Prostate gland (tissue), 2 donors: ENCODE measurements at regions of chr20 and their contacts with region 1.

Region 1: GRCh38 chr20:50189681-50190582 is 698 bp upstream of the CEBPB start:
- DNase-seq: peak; percentile 88
- H3K4me3 ChIP-seq: peak overlapping the region; percentile 83 to 92
- H3K27ac ChIP-seq: peak overlapping the region; percentile 99
- H3K4me1 ChIP-seq: no peaks in the 10 kb centered on the region
- H3K27me3 ChIP-seq: no peaks in the 10 kb centered on the region
- CTCF ChIP-seq: peak; percentile 80 to 98 (median 88)
- POLR2A ChIP-seq: no peak

Region 2: DNA sequence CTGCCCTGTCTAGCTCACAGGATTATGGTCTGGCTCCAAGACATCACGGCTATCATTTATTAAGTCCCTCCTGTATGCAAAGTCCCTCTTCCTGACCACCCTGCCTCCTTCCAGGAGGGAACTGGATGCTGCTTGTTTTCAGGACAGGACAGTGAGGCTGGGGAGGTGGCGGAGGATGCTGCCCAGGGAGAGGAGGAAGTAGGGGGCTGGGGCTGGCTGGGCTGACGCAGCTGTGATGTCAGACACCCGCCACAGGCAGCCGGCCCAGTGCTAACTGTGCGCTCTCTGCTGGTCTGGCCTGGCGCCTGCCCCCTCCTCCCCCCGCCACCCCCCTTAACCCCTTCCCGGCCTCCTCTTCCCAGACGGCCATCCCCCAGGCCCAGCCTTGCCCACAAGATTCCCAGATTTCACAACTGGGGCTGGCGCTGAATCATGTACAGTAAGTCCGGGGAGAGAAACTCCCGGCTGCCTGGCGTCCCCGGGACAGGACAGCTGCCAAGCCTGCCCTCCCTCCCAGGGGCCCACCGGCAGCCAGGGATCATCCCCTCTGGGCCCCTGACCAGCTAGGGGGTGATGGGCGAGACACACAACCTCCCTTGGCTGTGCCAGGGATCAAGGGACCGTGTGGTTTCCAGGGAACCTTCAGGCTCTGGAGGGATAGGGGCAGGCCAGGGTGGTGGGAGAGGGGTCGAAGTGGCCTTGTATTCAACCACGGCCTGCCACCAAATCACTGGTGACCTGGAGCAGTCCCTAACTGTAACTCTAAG is 118.8 kb after region 1 on chr20:
- intact Hi-C with region 1: loop called (anchors 5 kb)
- DNase-seq: peak; percentile 70
- H3K4me3 ChIP-seq: no peak overlapping the region
- H3K27ac ChIP-seq: peak overlapping the region; percentile 82 to 83
- H3K4me1 ChIP-seq: peaks cover 14% of the 10 kb centered on the region
- H3K27me3 ChIP-seq: no peaks in the 10 kb centered on the region
- CTCF ChIP-seq: peak in 1 of 4 experiments; percentile 12
- POLR2A ChIP-seq: peak; percentile 45

Region 3: DNA sequence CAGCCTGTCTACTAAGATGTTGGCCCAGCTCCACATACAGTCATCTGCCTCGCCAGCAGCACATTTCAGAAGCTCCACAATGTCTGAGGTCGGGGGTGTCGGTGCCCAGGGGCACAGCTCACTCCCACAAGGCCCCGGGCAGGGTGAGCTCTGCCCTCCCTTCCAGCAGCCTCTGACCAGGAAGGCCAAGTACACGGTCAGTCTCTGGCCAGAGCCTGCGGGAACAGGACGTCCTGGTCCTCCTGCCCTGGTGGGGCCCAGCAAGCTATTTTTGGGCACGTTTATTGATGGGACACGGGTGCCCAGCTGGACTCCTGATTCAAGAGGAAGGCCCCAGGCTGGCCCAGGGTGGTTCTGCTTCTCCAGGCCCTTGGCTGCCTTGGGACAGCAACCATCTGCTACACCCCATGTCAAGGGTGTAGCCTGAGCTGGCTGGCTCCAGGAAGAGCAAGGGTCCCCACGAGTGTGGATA is 205.4 kb after region 1 on chr20:
- intact Hi-C with region 1: loop called (anchors 5 kb)
- DNase-seq: peak; percentile 55
- H3K4me3 ChIP-seq: no peak overlapping the region
- H3K27ac ChIP-seq: peak overlapping the region; percentile 69 to 76
- H3K4me1 ChIP-seq: peaks cover 8% of the 10 kb centered on the region
- H3K27me3 ChIP-seq: no peaks in the 10 kb centered on the region
- CTCF ChIP-seq: no peak
- POLR2A ChIP-seq: no peak

Region 4: DNA sequence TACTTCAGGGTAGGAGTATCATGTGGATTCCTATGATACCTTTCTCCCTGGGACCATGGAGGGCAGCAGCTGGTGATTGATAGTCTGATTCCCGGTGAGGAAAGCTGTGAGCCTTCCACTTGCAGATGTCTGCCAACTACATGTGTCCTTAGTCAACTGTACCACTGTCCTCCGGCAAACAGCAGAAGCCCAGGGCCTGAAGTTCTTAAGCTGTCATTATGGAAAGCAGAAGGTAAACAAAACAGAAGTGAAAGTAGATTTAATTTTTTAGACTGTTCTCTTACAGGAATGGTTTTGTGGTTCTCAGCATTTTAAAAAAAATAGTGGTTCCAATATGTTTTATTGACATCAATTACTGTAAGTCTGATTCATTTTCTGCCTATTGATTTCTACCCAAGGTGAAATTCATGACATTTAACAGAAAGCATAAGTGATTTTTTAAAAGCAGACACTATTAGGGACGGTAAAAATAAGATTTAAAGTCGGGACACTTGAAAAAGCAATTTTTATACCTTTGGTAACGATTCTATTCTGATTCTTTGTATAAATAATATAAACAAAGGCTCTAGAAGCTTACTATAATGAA is 356.9 kb after region 1 on chr20:
- intact Hi-C with region 1: no loop called
- DNase-seq: no peak
- H3K4me3 ChIP-seq: no peak overlapping the region
- H3K27ac ChIP-seq: peak overlapping the region in 1 of 2 donors; percentile 3
- H3K4me1 ChIP-seq: no peaks in the 10 kb centered on the region
- H3K27me3 ChIP-seq: no peaks in the 10 kb centered on the region
- CTCF ChIP-seq: no peak
- POLR2A ChIP-seq: no peak

Region 5: GRCh38 chr20:50575847-50576720 is 386.2 kb after region 1 on chr20:
- intact Hi-C with region 1: loop called (anchors 2 kb)
- DNase-seq: peak; percentile 71
- H3K4me3 ChIP-seq: no peak overlapping the region
- H3K27ac ChIP-seq: peak overlapping the region in 1 of 2 donors; percentile 21
- H3K4me1 ChIP-seq: peaks cover 8% of the 10 kb centered on the region
- H3K27me3 ChIP-seq: no peaks in the 10 kb centered on the region
- CTCF ChIP-seq: peak; percentile 33 to 82 (median 79)
- POLR2A ChIP-seq: no peak